Activated CD4-positive, alpha-beta T cell treated with anti-CD3 and anti-CD28 coated beads for 36 hours (primary cell): ENCODE measurements at regions of chr12 and their contacts with region 1.

Region 1: DNA sequence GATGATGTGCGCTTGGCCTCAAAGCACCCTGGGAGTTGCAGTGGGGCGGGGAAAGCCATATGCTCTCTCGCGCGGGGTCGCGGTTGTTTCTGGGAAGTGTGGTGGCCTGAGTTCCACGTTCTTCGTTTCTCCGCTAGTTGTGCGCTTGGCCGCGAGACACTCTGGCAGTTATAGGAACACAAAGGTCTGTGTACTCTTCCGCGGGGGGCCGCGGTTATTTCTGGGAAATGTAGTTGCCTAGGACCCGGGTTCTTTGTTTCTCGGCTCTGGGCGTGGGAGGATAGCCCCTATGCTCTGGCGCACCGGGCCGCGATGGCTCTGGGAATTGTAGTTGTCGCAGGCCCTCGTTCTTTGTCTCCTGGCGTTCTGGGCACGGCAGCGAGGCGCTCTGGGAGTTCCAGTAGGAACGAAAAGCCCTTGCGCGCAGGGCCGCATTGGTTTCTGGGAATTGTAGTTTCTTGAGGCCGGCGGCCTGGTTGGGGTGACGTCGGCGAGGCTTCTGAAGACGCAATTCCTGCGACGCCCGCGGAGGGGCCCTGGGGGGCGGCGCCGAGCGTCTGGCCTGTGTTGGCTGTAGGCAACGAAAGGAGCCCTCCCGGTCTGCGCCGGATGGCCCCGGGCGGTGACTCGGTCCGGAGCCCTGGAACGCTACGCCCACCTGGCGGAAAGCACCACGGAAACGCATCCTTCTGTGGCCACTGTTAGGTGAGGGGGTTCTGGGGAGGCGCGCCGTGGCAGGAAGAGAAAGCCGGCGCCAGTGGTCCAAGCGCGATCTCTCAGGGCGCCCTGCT is at the start of gene ZNF140:
- DNase-seq: peak; percentile 97
- ATAC-seq: peak; percentile 64
- H3K4me3 Mint-ChIP-seq: no peak within 1 kb of the TSS
- H3K27ac Mint-ChIP-seq: no peak within 1 kb of the TSS
- H3K4me1 Mint-ChIP-seq: peaks cover 13% of the 10 kb centered on the region
- H3K27me3 Mint-ChIP-seq: no peaks in the 10 kb centered on the region
- total RNA-seq, gene ZNF140: 13.3 to 14.3 TPM

Region 2: DNA sequence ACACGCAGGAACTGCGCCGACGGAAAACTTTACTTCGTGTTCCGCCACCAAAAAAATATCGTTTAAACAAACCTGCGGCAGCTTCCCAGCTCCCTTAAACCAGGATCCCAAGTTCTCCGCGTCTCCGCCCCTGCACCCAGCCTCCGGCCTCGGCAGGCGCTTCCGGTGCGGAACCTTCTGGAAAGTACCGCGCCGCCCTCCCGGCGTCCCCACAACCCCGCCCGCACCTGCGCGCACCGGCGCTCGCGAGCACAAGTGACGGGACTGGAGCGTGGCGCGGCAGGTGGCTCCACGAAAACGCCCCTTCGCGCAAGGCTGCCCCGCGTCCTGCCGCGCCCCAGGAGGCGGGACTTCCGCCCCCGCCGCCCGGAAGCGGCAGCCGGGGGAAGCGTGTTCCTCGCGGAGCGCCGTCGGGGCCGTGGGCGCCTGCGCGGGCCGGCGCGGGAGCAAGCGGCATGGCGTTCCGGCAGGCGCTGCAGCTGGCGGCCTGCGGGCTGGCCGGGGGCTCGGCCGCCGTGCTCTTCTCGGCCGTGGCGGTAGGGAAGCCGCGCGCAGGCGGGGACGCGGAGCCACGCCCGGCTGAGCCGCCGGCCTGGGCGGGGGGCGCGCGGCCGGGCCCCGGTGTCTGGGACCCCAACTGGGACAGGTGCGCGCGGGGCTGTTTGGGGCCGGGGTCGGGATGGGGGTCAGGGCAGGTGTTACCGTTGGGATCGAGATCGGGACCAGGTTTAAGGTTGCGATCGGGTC is 370.0 kb before region 1 on chr12 and contains the start of gene PGAM5:
- CTCF ChIA-PET with region 1: no interaction called
- POLR2A ChIA-PET with region 1: no interaction called
- intact Hi-C with region 1: loop called in 1 of 2 experiments (anchors 1 kb)
- DNase-seq: peak; percentile 92
- ATAC-seq: peak; percentile 92
- H3K4me3 Mint-ChIP-seq: peak within 1 kb of the TSS; percentile 75
- H3K27ac Mint-ChIP-seq: peak within 1 kb of the TSS; percentile 66
- H3K4me1 Mint-ChIP-seq: peaks cover 24% of the 10 kb centered on the region
- H3K27me3 Mint-ChIP-seq: no peaks in the 10 kb centered on the region
- total RNA-seq, gene PGAM5: 65.6 to 74.0 TPM

Region 3: DNA sequence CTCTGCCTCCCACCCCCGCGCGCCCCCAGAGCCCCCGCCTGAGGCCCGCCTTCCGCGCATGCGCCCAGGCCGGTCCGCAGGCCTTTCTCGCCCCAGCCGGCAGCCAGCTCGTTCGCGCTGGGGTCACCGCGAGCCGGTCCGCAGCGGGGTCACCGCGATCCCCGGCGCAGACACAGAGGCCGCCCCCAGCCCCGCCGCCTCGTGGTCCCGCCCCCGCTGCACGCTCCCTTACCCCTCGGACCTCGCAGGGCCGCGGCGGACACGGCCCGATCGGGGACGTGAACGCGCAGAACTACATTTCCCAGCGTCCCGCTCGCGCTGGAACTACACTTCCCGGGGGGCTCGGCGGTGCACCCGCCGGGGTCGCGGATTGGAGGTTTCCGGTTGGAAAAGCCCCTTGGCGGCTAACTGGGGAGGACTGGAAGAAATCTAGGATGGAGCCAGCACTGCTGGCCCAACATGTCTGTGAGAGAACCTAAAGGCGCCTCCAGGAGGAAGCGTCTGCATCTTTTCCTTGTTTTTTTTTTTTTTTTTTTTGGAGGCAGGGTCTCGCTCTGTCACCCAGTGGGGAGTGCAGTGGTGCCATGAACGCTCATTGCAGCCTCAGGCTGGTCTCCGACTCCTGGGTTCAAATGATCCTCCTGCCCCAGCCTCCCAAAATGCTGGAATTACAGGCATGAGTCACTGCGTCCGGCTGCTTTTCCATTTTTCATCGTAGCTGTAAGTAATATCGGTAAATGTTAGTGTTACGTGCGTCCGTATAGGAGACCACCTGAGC is 124.4 kb before region 1 on chr12 and contains the start of gene ZNF605:
- CTCF ChIA-PET with region 1: no interaction called
- POLR2A ChIA-PET with region 1: no interaction called
- intact Hi-C with region 1: loop called (anchors 1 kb)
- DNase-seq: peak; percentile 93
- ATAC-seq: peak; percentile 91
- H3K4me3 Mint-ChIP-seq: peak within 1 kb of the TSS; percentile 93
- H3K27ac Mint-ChIP-seq: peak within 1 kb of the TSS; percentile 88
- H3K4me1 Mint-ChIP-seq: peaks cover 22% of the 10 kb centered on the region
- H3K27me3 Mint-ChIP-seq: no peaks in the 10 kb centered on the region
- total RNA-seq, gene ZNF605: 8.0 to 8.3 TPM

Region 4: GRCh38 chr12:132986001-132986912 is 94.3 kb before region 1 on chr12 and contains the start of gene ZNF26:
- CTCF ChIA-PET with region 1: no interaction called
- POLR2A ChIA-PET with region 1: interaction called, 6 read pairs
- intact Hi-C with region 1: loop called (anchors 1 kb)
- DNase-seq: peak; percentile 94
- ATAC-seq: peak; percentile 97
- H3K4me3 Mint-ChIP-seq: peak within 1 kb of the TSS; percentile 79
- H3K27ac Mint-ChIP-seq: peak within 1 kb of the TSS; percentile 96
- H3K4me1 Mint-ChIP-seq: peaks cover 26% of the 10 kb centered on the region
- H3K27me3 Mint-ChIP-seq: peaks cover 4% of the 10 kb centered on the region
- total RNA-seq, gene ZNF26: 12.3 to 17.0 TPM

Region 5: DNA sequence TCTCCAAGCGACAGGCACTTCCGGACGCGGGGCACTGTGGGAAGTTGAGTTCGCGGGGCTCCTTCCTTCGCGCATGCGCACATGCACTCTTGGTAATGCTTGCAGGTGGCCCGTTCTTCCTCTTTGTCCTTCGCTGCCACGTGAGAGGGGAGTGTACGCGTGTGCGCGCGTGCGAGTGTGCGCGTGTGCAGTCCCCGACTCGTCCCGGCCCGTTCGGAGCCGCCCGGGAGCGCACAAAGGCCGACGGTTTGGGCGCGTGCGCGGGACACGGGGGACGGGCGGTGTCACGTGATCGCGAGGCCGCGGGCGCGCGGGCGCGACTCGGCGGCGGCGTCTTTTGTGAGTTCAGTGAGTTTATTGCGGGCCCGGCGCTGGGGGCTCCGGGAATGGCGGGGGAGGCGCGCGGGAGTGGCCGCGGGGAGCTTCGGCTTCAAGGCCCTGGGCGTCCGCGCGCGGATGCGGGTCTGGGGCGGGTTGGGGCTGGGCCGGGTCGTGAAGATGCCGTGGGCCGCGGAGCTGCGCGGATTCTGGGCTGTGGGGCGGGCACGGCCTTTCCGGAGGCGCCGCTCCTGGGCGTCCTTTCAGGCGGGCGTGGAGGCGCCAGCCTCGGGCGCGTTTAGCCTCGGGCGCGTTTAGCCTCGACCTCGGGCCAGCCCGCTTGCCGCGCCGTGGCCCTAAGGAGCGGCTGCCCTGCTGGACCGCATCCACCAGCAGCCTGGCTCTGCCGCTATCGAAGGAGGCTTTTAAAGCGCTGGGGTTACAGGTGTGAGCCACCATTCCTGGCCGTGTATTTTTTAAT is 43.2 kb before region 1 on chr12 and contains the start of gene ZNF84:
- CTCF ChIA-PET with region 1: interaction called, 3 read pairs
- POLR2A ChIA-PET with region 1: interaction called, 7 read pairs
- intact Hi-C with region 1: loop called (anchors 1 kb)
- DNase-seq: peak; percentile 98
- ATAC-seq: peak; percentile 97
- H3K4me3 Mint-ChIP-seq: peak within 1 kb of the TSS; percentile 85
- H3K27ac Mint-ChIP-seq: peak within 1 kb of the TSS; percentile 94
- H3K4me1 Mint-ChIP-seq: peaks cover 10% of the 10 kb centered on the region
- H3K27me3 Mint-ChIP-seq: no peaks in the 10 kb centered on the region
- total RNA-seq, gene ZNF84: 21.5 to 24.1 TPM

Region 6: DNA sequence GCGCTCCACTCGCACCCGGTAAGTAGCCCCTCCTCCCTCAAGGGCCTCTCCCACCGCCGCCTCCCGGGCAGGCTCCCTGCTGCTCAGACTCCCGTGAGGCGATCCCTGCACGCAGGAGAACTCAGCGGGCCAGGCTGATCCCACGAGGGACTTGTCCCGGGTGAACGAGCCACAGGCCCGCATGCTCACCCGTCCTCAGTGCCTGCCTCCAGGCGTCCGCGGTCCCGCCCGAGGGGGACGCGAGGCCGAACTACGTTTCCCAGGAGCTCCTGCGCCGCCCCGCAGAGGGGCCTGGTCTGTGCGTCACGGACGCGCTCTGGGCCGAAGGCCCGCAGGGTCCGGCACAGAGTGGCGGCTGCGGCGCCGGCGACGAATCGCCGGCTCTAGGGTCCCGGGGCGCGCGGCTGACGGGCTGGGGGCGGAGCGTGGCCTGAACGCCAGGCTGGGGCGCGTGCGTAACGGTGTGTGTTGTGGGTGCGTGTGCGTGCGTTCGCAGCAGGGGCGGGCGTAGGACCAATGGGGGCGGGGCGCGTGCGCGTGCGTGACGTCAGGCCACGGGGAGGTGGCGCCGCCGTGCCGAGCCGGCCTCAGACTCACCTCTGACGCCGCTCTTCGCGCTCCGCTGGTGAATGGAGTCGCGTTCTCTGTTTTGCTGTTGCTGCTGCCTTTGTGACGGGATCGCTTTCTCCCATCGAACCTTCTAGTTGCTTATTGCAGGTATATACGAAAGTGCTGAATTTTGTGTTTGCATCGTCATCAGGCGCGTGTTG is 49.7 kb after region 1 on chr12 and contains the starts of genes ZNF10 and ZNF891:
- CTCF ChIA-PET with region 1: interaction called, 3 read pairs
- POLR2A ChIA-PET with region 1: interaction called, 4 read pairs
- intact Hi-C with region 1: loop called (anchors 1 kb)
- DNase-seq: peak; percentile 98
- ATAC-seq: peak; percentile 90
- H3K4me3 Mint-ChIP-seq: peak within 1 kb of the TSS; percentile 86
- H3K27ac Mint-ChIP-seq: peak within 1 kb of the TSS; percentile 98
- H3K4me1 Mint-ChIP-seq: peaks cover 15% of the 10 kb centered on the region
- H3K27me3 Mint-ChIP-seq: no peaks in the 10 kb centered on the region
- total RNA-seq, gene ZNF10: 4.8 to 5.1 TPM
- total RNA-seq, gene ZNF891: 1.9 to 2.1 TPM

Region 7: GRCh38 chr12:133181238-133181959 is 100.8 kb after region 1 on chr12 and contains the start of gene ZNF268:
- CTCF ChIA-PET with region 1: interaction called, 5 read pairs
- POLR2A ChIA-PET with region 1: interaction called, 6 read pairs
- intact Hi-C with region 1: loop called (anchors 1 kb)
- DNase-seq: peak; percentile 95
- ATAC-seq: peak; percentile 96
- H3K4me3 Mint-ChIP-seq: peak within 1 kb of the TSS; percentile 90
- H3K27ac Mint-ChIP-seq: peak within 1 kb of the TSS; percentile 95
- H3K4me1 Mint-ChIP-seq: peaks cover 11% of the 10 kb centered on the region
- H3K27me3 Mint-ChIP-seq: no peaks in the 10 kb centered on the region
- total RNA-seq, gene ZNF268: 14.0 to 14.6 TPM